Naive thymus-derived CD4-positive, alpha-beta T cell (primary cell): ENCODE measurements at regions of chr4 and their contacts with region 1.

Region 1: DNA sequence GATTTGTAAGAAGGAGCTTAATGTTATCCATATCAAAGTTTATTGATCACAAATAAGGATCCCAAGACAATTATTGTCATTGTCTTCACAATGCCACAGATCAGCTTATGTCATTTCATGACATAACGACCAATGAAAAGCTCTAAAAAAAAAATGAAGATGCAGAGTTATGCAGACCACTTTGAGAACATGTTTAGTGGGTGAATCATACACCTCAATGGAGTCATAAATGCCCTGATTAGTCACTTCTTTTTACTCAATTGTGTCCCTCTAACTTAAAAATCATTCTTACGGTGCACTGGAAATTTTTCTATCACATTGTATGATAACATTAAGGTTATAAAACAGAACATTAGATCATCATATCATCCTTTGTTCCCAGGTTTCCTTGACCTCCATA is 87.6 kb upstream of the GABRG1 start:
- DNase-seq: no peak
- ATAC-seq: no peak
- H3K4me3 ChIP-seq: no peak overlapping the region
- H3K4me3 Mint-ChIP-seq: no peak overlapping the region
- H3K27ac ChIP-seq: no peak overlapping the region
- H3K27ac Mint-ChIP-seq: no peak overlapping the region
- H3K4me1 ChIP-seq: no peaks in the 10 kb centered on the region
- H3K4me1 Mint-ChIP-seq: no peaks in the 10 kb centered on the region
- H3K27me3 ChIP-seq: no peaks in the 10 kb centered on the region
- H3K27me3 Mint-ChIP-seq: no peaks in the 10 kb centered on the region

Region 2: DNA sequence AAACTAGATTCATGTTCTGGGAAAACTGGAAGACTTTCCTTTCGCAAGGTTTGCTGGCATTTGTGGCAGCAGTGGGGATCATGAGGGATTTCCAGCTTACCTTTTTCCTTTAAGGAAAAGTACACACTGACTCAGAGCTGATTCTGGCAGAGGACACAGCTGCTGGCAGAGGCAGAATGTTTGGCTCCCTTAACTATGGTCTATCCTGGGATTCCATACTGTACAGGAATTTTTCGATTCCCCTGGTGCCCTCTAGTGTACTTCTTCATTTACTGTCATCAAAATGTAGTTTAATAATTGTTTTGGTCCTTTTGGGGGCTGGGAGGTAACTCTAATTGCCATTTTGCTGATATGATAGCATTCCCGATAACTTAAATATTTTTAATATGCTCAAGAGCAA is 240.3 kb before region 1 on chr4:
- CTCF ChIA-PET with region 1: no interaction called
- POLR2A ChIA-PET with region 1: no interaction called
- intact Hi-C with region 1: loop called in 1 of 2 experiments (anchors 10 kb)
- DNase-seq: no peak
- ATAC-seq: no peak
- H3K4me3 ChIP-seq: no peak overlapping the region
- H3K4me3 Mint-ChIP-seq: no peak overlapping the region
- H3K27ac ChIP-seq: no peak overlapping the region
- H3K27ac Mint-ChIP-seq: no peak overlapping the region
- H3K4me1 ChIP-seq: no peaks in the 10 kb centered on the region
- H3K4me1 Mint-ChIP-seq: no peaks in the 10 kb centered on the region
- H3K27me3 ChIP-seq: no peaks in the 10 kb centered on the region
- H3K27me3 Mint-ChIP-seq: no peaks in the 10 kb centered on the region